ENCODE measurements at regions of chr13 and their contacts with region 1.

Region 1: DNA sequence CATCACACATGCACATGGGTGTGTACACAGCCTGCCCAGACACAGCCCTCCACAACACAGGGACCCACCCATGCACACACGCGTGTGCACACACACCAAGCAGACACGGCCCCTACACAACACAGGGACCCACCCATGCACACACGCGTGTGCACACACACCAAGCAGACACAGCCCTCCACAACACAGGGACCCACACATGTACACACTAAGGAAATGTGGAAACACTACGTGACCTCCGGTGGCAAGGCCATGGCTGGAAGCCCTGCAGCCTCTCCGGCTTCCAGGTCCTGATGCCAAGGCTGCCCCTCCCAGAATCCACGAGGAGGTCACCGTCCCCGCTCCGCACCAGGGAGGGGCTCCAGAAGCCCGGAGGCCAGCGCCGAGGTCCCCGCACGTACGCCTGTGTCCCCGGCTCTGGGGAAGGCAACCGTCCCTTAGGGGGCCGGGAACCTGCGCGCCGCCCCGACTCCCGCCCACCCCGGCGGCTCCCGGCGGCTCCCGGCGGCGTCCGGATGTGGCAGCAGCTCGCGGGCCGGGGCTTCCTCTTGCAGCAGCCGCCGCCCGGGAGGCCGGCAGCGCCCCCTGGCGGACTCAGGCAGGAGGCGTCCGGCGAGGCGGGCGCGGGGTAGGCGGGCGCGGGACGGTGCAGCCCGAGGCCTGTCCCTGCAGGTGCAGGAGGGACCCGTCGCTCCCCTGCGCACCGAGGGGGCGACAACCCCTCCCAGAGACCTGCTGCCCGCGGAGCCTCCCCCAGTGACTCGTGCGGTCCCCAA is 29.8 kb upstream of the GRTP1 start:
- DNase-seq: peak; percentile 1
- ATAC-seq: peak; percentile 99
- H3K4me3 ChIP-seq: peak overlapping the region; percentile 87
- H3K27ac ChIP-seq: peak overlapping the region; percentile 9; the same call in 1 of the 2 replicates
- H3K4me1 ChIP-seq: no peaks in the 10 kb centered on the region
- H3K27me3 ChIP-seq: no peaks in the 10 kb centered on the region
- CTCF ChIP-seq: peak; percentile 66 to 77 (median 66); a peak in 5 of 6 replicates
- EP300 ChIP-seq: no peak
- POLR2A ChIP-seq: peak; percentile 50; the same call in 1 of the 2 replicates
- RAD21 ChIP-seq: peak; percentile 81

Region 2: DNA sequence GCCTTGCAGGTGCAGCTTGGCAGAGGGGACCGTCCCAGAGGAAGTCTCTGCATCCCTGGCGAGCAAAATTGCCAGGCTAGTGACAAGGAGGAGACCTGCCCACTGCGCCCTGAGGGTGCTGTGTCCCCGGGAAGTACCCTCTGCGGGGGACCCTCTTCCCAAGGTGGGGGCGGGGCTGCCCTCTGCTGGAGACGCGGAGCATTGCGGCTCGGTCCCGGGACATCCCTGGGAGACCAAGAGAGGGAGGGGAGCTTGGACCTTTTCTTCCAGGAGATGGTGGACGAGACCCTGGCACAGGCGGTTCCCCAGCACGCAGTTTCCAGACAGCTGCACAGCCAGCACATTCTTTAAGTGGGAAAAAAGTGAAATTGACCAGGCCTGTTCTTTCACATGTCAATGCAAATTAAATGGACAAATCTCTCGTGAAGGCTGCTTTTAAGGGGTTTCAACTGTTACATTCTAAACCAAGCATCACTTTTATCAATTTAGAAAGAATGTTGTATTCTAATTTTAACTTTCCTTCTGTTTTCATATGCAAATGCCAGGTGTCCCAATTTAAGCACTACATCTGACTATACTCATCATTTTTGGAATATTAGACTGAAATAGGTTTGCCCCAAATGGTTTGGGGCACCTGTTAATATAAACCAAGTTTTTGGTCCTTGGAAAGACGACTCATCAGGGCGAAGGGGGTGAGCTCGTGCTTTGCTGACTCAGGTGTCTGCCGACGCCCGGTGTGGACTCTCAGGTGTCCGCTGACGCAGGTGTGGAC is 364.1 kb before region 1 on chr13:
- CTCF ChIA-PET with region 1: no interaction called
- POLR2A ChIA-PET with region 1: no interaction called
- RAD21 ChIA-PET with region 1: no interaction called
- SMC1A ChIA-PET with region 1: no interaction called
- in situ Hi-C with region 1: no loop called
- intact Hi-C with region 1: loop called (anchors 10 kb)
- DNase-seq: no peak
- ATAC-seq: peak; percentile 66
- H3K4me3 ChIP-seq: no peak overlapping the region
- H3K27ac ChIP-seq: no peak overlapping the region
- H3K4me1 ChIP-seq: no peaks in the 10 kb centered on the region
- H3K27me3 ChIP-seq: no peaks in the 10 kb centered on the region; a peak in 2 of 4 replicates
- CTCF ChIP-seq: peak; percentile 60 to 90 (median 70)
- EP300 ChIP-seq: no peak
- POLR2A ChIP-seq: no peak
- RAD21 ChIP-seq: peak; percentile 47

Region 3: GRCh38 chr13:113275387-113275786 is 118.4 kb before region 1 on chr13:
- CTCF ChIA-PET with region 1: interaction called, 4 read pairs
- POLR2A ChIA-PET with region 1: interaction called, 6 read pairs
- RAD21 ChIA-PET with region 1: interaction called, 5 read pairs
- SMC1A ChIA-PET with region 1: interaction called, 3 read pairs
- in situ Hi-C with region 1: no loop called
- intact Hi-C with region 1: loop called (anchors 1 kb)
- DNase-seq: no peak
- ATAC-seq: peak; percentile 91
- H3K4me3 ChIP-seq: no peak overlapping the region
- H3K27ac ChIP-seq: no peak overlapping the region
- H3K4me1 ChIP-seq: no peaks in the 10 kb centered on the region
- H3K27me3 ChIP-seq: no peaks in the 10 kb centered on the region
- CTCF ChIP-seq: peak; percentile 36 to 59 (median 44); a peak in 5 of 6 replicates
- EP300 ChIP-seq: no peak
- POLR2A ChIP-seq: no peak
- RAD21 ChIP-seq: peak; percentile 51; the same call in 1 of the 2 replicates

Region 4: DNA sequence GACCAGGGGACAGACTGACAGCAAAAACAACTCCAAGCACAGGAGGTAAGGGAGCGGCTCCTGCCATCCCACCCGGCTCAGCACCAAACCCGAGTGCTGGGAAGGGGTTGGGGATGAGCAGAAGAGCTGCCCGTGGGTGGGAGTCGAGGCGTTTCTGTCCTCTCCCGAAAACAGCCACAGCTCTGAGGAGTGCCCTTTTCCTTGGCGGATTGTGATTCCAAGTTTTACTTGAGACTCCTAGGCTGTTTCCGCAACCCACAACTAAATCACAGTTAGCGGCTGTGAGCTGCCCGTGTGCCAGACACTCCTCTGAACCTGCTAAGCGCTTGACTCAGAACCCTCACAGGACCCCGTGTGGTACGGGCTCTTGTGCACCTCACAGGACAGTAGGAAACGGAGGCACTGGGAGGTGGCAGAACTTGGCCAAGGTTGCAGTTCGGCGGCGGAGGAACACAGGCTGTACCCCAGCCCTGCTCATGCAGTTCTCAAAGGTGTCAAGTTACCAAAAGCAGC is 806.7 kb after region 1 on chr13:
- CTCF ChIA-PET with region 1: no interaction called
- POLR2A ChIA-PET with region 1: no interaction called
- RAD21 ChIA-PET with region 1: no interaction called
- SMC1A ChIA-PET with region 1: no interaction called
- in situ Hi-C with region 1: no loop called
- intact Hi-C with region 1: no loop called
- DNase-seq: no peak
- ATAC-seq: no peak
- H3K4me3 ChIP-seq: no peak overlapping the region
- H3K27ac ChIP-seq: no peak overlapping the region
- H3K4me1 ChIP-seq: no peaks in the 10 kb centered on the region
- H3K27me3 ChIP-seq: no peaks in the 10 kb centered on the region
- CTCF ChIP-seq: no peak
- EP300 ChIP-seq: no peak
- POLR2A ChIP-seq: no peak
- RAD21 ChIP-seq: no peak

Measured in GM12878 (cell line).